PC-3 (cell line): ENCODE measurements at regions of chr14 and their contacts with region 1.

Region 1: DNA sequence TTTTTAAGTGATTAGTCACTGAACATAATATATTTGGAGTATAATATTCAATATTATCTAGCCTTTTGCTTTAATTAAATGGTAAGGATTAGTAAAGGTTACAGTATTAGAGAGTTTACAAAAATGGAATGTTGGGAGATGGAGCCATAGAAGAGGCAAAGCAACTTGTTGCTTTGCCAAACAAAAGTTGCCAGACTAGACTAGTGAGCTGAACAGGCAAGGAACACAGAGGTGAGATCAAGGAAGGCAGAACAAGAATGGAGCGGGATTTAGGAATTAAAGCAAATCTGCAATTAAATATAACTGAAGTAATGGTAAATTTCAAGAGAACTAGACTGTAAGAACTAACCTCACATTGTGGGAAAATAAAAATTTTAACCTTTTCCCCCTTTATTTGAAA is 5.1 kb downstream of the ARF6 start:
- DNase-seq: peak; percentile 73
- ATAC-seq: peak; percentile 28
- H3K4me3 ChIP-seq: peak overlapping the region; percentile 91
- H3K27ac ChIP-seq: peak overlapping the region; percentile 24
- H3K4me1 ChIP-seq: peaks cover 32% of the 10 kb centered on the region
- H3K27me3 ChIP-seq: no peaks in the 10 kb centered on the region
- CTCF ChIP-seq: no peak

Region 2: DNA sequence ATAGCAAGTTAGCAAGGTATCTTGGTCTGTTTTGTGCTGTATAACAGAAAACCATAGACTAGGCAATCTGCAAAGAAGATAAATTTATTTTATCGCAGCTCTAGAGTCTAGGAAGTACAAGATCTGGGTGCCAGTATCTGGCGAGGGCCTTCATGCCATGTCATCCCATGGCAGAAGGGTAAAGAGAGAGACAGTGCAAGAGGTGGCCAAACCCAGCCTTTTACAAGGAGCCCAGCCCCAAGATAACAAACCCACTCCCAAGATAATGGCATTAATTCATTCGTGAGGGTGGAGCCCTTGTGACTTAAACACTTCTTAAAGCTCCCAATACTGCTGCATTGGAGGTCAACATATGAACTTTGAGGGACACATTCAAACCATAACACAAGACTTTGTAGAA is 328.7 kb before region 1 on chr14:
- CTCF ChIA-PET with region 1: no interaction called
- POLR2A ChIA-PET with region 1: no interaction called
- intact Hi-C with region 1: no loop called
- DNase-seq: no peak
- ATAC-seq: no peak
- H3K4me3 ChIP-seq: no peak overlapping the region
- H3K27ac ChIP-seq: no peak overlapping the region
- H3K4me1 ChIP-seq: no peaks in the 10 kb centered on the region
- H3K27me3 ChIP-seq: no peaks in the 10 kb centered on the region
- CTCF ChIP-seq: no peak

Region 3: GRCh38 chr14:49946320-49947141 is 48.6 kb after region 1 on chr14:
- CTCF ChIA-PET with region 1: no interaction called
- POLR2A ChIA-PET with region 1: interaction called, 7 read pairs
- intact Hi-C with region 1: loop called (anchors 1 kb)
- DNase-seq: peak; percentile 93
- ATAC-seq: peak; percentile 82
- H3K4me3 ChIP-seq: peak overlapping the region; percentile 23; the same call in 1 of the 2 replicates
- H3K27ac ChIP-seq: peak overlapping the region; percentile 65
- H3K4me1 ChIP-seq: peaks cover 50% of the 10 kb centered on the region
- H3K27me3 ChIP-seq: no peaks in the 10 kb centered on the region
- CTCF ChIP-seq: no peak

Region 4: GRCh38 chr14:50311975-50312733 is 414.2 kb after region 1 on chr14 and contains the starts of genes DMAC2L and L2HGDH:
- CTCF ChIA-PET with region 1: no interaction called
- POLR2A ChIA-PET with region 1: no interaction called
- intact Hi-C with region 1: no loop called
- DNase-seq: peak; percentile 98
- ATAC-seq: peak; percentile 91
- H3K4me3 ChIP-seq: peak within 1 kb of the TSS; percentile 93
- H3K27ac ChIP-seq: peak within 1 kb of the TSS; percentile 77
- H3K4me1 ChIP-seq: peaks cover 18% of the 10 kb centered on the region
- H3K27me3 ChIP-seq: no peaks in the 10 kb centered on the region
- CTCF ChIP-seq: peak; percentile 20
- total RNA-seq, gene DMAC2L: 2.3 and 18.1 TPM in 2 replicates
- total RNA-seq, gene L2HGDH: 27.8 and 41.6 TPM in 2 replicates